Activated naive CD4-positive, alpha-beta T cell treated with anti-CD3 and anti-CD28 coated beads for 36 hours (primary cell): ENCODE measurements at regions of chr2 and their contacts with region 1.

Region 1: DNA sequence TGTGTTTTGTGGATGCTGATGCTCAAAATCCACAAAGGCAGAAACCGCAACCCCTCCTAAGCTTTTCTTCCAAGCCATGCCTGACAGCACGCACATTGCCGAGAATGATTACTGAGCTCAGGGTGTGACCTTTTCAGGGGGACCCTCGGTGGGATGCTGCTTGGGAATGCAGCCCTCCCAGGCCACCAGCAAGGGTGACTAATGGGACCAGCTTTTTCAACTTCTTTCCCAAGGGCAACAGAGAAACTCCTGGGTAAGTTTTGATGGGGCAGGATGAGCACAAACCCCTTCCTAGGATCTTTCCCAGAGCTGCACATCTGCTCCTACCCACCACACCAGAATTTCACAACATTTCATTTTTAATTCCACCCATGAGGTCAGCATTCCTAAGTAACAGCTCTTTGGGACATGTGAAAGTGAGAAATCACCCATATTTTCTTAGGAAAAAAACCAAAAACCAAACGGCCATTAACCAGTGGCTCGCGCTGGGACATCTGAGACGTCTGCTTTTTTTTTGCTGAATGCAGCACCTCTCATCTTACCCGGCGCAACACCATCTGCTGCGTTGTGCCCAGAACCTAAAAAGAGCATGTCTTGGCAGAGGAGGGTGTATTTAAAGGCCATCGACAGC is 119.0 kb downstream of the ARL4C start:
- DNase-seq: no peak
- H3K4me3 Mint-ChIP-seq: no peak overlapping the region
- H3K27ac Mint-ChIP-seq: no peak overlapping the region
- H3K4me1 Mint-ChIP-seq: peaks cover 34% of the 10 kb centered on the region
- H3K27me3 Mint-ChIP-seq: no peaks in the 10 kb centered on the region

Region 2: DNA sequence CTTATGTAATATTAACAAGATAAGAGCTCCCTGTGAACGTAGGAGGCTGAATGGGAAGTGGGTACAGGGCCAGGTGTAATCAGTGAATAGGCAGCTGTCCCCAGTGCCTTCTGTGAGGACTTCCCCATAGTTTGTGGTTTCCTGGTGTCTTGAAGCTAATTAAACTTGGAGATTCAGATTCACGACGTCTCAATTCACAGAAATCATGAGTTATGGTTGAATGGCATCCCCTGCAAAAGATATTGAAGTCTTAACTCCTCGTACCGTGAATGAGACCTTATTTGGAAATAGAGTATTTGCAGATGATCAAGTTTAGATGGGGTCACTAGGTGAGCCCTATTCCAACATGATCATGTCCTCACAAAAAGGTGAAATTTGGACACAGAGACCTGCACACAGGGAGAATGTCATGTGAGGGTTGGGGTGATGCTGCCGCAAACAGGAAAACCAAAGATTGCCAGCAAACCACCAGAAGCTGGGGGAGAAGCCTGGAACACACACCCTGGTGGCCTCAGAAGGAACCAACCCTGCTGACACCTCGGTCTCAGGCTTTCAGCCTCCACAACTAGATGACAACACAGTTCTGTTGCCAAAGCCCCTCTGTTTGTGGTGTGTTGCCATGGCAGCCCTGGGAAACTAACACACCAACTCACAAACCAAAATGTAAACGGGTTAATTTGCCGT is 105.8 kb after region 1 on chr2:
- CTCF ChIA-PET with region 1: interaction called, 10 read pairs
- intact Hi-C with region 1: loop called (anchors 2 kb)
- DNase-seq: peak; percentile 88
- H3K4me3 Mint-ChIP-seq: peak overlapping the region; percentile 59
- H3K27ac Mint-ChIP-seq: peak overlapping the region; percentile 88
- H3K4me1 Mint-ChIP-seq: peaks cover 78% of the 10 kb centered on the region
- H3K27me3 Mint-ChIP-seq: no peaks in the 10 kb centered on the region